ENCODE measurements at regions of chr4 and their contacts with region 1.

Region 1: DNA sequence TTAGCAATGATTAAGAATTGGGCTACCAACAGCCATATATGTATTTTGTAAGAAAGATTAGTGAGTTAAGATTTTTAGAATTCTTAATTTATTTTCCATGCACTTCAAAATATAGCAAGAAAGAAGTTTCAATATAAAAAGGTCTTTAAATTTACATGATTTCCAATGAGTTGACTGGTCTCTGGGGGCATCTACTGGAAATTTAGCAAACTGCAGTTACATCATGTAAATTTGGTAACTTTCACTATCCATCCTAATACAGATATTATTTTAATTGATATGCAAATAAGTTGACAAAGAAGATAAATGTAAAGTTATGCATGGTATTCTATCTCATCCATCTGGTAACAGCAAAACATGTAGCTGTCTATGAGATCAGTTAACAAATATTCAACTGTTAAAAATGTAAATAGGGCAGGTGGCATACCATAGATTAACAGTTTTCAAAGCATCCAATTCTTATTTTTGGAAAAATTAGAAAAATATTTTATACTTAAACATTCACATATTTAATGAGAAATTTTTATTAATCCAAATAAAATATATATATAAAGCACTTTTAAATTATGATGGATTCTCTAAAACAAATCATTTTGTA is 29.1 kb downstream of the TTC29 start:
- DNase-seq: peak; percentile 62
- H3K4me3 ChIP-seq: no peak overlapping the region
- H3K27ac ChIP-seq: no peak overlapping the region
- H3K4me1 ChIP-seq: no peaks in the 10 kb centered on the region
- H3K27me3 ChIP-seq: no peaks in the 10 kb centered on the region

Region 2: DNA sequence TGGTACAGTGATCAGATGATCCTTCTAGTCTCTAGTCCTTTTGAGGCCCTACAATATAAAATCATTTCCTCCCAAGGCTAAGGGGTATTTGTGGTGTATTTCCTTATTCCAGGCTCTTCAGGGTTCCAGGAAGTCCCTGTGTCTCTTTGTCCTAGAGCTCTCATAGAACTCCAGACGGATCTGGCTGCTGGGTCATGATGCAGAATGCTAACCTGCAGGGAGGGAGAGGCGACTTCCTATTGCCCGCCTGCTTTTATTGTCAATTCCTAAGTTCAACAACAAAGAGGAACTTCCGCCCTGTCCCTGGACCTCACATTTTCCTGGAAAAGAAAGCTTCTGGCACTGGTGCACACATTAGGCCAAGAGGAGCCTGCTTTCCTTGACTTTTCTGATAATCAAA is 932.0 kb before region 1 on chr4:
- in situ Hi-C with region 1: no loop called
- DNase-seq: no peak
- H3K4me3 ChIP-seq: no peak overlapping the region
- H3K27ac ChIP-seq: no peak overlapping the region
- H3K4me1 ChIP-seq: no peaks in the 10 kb centered on the region
- H3K27me3 ChIP-seq: no peaks in the 10 kb centered on the region

Region 3: GRCh38 chr4:146291313-146291712 is 625.3 kb before region 1 on chr4:
- in situ Hi-C with region 1: no loop called
- DNase-seq: no peak
- H3K4me3 ChIP-seq: no peak overlapping the region
- H3K27ac ChIP-seq: no peak overlapping the region
- H3K4me1 ChIP-seq: no peaks in the 10 kb centered on the region
- H3K27me3 ChIP-seq: no peaks in the 10 kb centered on the region

Region 4: GRCh38 chr4:146333187-146333894 is 583.2 kb before region 1 on chr4:
- in situ Hi-C with region 1: loop called (anchors 10 kb)
- DNase-seq: peak; percentile 62
- H3K4me3 ChIP-seq: peak overlapping the region; percentile 41
- H3K27ac ChIP-seq: peak overlapping the region; percentile 14
- H3K4me1 ChIP-seq: peaks cover 58% of the 10 kb centered on the region
- H3K27me3 ChIP-seq: no peaks in the 10 kb centered on the region

Measured in GM23248 (cell line).